H1 (cell line): ENCODE measurements at regions of chr11 and their contacts with region 1.

Region 1: DNA sequence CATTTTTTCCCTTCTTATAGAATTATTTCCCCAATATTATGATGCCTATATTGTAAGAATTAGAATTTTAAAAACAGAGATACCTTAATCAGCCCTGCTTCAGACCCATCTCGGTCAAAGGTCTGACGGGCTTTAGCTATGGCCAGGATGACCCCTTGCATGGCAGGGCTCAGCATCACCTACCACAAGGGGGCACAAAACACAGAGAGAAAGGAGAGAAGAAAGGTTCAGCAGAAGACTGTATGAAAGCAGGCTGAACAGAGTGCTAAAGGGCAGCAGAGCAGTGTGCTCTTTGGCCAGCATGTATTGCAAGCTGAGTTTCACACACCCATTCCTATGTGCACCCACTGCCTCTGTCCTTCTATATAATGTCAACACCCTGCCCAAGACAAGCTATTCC is 26.8 kb downstream of the CLDN25 start:
- DNase-seq: peak in 1 of 2 experiments; percentile 70
- H3K4me3 ChIP-seq: no peak overlapping the region
- H3K27ac ChIP-seq: no peak overlapping the region
- H3K4me1 ChIP-seq: no peaks in the 10 kb centered on the region
- H3K27me3 ChIP-seq: no peaks in the 10 kb centered on the region
- CTCF ChIP-seq: peak; percentile 69 to 87 (median 70)
- EP300 ChIP-seq: no peak
- POLR2A ChIP-seq: no peak
- RAD21 ChIP-seq: peak; percentile 62 to 73

Region 2: GRCh38 chr11:113818426-113818825 is 12.0 kb after region 1 on chr11:
- CTCF ChIA-PET with region 1: interaction called, 10 read pairs
- POLR2A ChIA-PET with region 1: no interaction called
- DNase-seq: no peak
- H3K4me3 ChIP-seq: no peak overlapping the region
- H3K27ac ChIP-seq: no peak overlapping the region
- H3K4me1 ChIP-seq: no peaks in the 10 kb centered on the region
- H3K27me3 ChIP-seq: no peaks in the 10 kb centered on the region
- CTCF ChIP-seq: no peak
- EP300 ChIP-seq: no peak
- POLR2A ChIP-seq: no peak
- RAD21 ChIP-seq: no peak

Region 3: DNA sequence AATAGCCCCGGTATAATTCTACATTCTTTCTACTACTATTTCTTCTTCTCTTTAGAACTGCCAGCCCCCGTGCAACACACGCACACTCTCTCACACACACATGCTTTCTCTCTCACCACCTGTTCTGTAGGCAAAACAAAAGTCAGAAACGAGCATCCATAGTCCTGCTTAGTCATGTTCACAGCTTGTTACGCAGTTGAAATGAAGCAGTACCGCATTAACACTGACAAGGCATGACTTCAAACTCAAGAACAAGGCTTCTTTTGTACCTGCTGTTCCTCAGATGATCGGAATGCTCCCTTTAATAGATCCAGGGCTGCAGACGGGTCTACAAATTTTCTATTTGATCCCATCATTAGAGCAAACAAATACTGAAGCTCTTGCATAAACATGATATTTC is 26.7 kb after region 1 on chr11:
- CTCF ChIA-PET with region 1: interaction called, 16 read pairs
- POLR2A ChIA-PET with region 1: no interaction called
- DNase-seq: no peak
- H3K4me3 ChIP-seq: no peak overlapping the region
- H3K27ac ChIP-seq: peak overlapping the region; percentile 15; the same call in 1 of the 2 replicates
- H3K4me1 ChIP-seq: no peaks in the 10 kb centered on the region
- H3K27me3 ChIP-seq: no peaks in the 10 kb centered on the region
- CTCF ChIP-seq: no peak
- EP300 ChIP-seq: no peak
- POLR2A ChIP-seq: no peak
- RAD21 ChIP-seq: no peak

Region 4: GRCh38 chr11:114082767-114083181 is 276.4 kb after region 1 on chr11:
- CTCF ChIA-PET with region 1: no interaction called
- POLR2A ChIA-PET with region 1: no interaction called
- DNase-seq: no peak
- H3K4me3 ChIP-seq: no peak overlapping the region
- H3K27ac ChIP-seq: no peak overlapping the region
- H3K4me1 ChIP-seq: peaks cover 0 to 9% (median 3%) of the 10 kb centered on the region in 4 experiments; a peak in 3 of 7 replicates
- H3K27me3 ChIP-seq: peaks cover 1 to 14% (median 12%) of the 10 kb centered on the region in 4 experiments; a peak in 5 of 7 replicates
- CTCF ChIP-seq: no peak
- EP300 ChIP-seq: no peak
- POLR2A ChIP-seq: no peak
- RAD21 ChIP-seq: no peak